Ascending aorta (tissue), 2 donors: ENCODE measurements at regions of chr1 and their contacts with region 1.

Region 1: DNA sequence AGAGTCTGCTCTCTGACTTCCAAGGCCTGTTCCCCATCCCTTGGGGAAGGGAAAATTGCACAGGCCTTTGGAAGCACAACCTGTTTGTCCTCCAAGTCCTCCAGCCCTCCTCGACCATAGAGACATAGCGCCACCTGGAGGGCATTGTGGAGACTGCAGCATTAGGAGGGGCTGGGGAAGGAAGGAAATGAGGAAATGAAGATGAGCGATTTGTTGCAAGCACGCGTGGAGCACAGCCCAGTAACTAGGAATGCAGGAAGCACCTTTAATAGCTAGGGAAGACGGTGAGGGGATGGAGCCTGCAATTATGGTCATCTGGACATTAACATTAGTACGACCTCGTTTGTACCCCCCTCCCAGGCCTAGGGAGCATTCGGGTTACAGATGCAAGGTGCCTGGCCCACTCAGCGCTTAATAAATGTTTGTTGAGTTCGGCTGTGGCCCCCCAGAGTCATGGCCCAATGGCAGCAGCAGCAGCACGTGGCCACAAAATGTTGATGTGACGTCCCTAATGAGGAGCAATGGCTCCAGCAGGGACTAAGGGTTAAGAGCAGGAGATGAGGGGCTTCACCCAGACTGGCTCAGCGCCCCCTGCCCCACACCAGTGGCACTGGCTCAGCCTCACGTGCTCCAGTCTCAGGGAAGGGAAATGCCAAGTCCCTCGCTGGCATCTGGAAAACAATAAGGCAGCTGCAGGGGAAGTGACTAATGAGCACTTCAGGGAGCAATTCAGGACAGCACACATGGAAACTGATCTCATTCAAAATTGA is 8.0 kb upstream of the CAMK2N1 start:
- DNase-seq: peak; percentile 35 to 91
- H3K4me3 ChIP-seq: no peak overlapping the region
- H3K27ac ChIP-seq: no peak overlapping the region
- H3K4me1 ChIP-seq: peaks cover 0 to 3% of the 10 kb centered on the region in 2 donors
- H3K27me3 ChIP-seq: no peaks in the 10 kb centered on the region
- CTCF ChIP-seq: peak; percentile 92 to 98 (median 94)

Region 2: DNA sequence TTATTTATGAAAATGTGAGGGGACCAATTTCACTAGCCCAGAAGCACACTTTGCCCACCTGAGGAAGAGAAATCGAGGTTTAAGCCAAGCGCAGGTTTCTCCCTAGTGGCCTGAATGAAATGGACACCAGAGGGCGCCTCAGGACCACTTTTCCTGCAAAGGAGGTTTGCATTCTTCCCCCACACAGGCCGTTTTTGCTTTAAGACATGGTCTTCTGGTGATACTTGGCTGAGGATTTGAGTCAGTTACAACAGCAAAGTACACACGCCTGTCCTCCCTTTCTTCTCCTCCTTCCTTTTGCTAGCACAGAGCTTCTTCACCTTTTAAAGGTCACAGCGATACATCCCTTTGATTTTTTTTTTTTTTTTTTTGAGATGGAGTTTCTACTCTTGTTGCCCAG is 576.0 kb before region 1 on chr1:
- intact Hi-C with region 1: loop called (anchors 1 kb)
- DNase-seq: peak in 1 of 2 donors; percentile 84
- H3K4me3 ChIP-seq: no peak overlapping the region
- H3K27ac ChIP-seq: no peak overlapping the region
- H3K4me1 ChIP-seq: no peaks in the 10 kb centered on the region
- H3K27me3 ChIP-seq: no peaks in the 10 kb centered on the region
- CTCF ChIP-seq: peak; percentile 67 to 91 (median 77)

Region 3: DNA sequence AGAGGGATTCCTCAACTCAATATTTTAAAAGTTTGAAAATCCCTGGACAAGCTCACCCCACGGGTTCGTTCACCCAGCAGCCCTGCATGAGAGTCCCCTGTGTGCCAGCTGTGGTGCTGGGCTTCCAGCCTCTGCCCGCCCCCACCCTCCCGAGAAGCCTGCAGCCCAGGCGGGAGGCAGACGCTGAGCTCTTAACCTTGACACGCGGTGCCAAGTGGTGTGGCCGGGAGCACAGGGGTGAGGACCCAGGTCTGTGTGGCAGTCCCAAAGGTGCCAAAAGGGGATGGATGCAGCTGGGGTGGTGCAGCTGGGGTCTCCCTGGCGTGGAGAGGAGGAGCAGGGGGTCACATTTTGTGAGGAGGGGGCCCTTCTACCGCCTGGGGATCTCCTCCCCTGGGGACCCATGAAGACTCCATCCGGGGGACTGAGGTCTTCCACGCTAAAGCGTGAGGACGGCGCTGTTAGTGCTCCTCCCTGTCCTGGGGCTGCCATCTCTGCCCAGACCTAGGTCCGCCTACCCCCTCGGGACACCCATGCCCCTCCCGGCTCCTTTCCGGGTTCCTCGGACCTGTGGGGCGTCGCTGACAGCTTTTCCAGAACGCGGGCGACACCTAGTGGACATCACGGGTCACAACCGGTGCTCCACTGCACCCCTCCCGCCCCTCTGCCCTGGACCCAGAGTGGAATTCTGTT is 342.0 kb before region 1 on chr1:
- intact Hi-C with region 1: loop called (anchors 5 kb)
- DNase-seq: peak in 1 of 2 donors; percentile 87
- H3K4me3 ChIP-seq: peak overlapping the region; percentile 44 to 49
- H3K27ac ChIP-seq: no peak overlapping the region
- H3K4me1 ChIP-seq: peaks cover 0 to 4% of the 10 kb centered on the region in 2 donors
- H3K27me3 ChIP-seq: no peaks in the 10 kb centered on the region
- CTCF ChIP-seq: peak; percentile 88 to 96 (median 93)

Region 4: GRCh38 chr1:20212685-20213331 is 281.2 kb before region 1 on chr1:
- intact Hi-C with region 1: loop called (anchors 2 kb)
- DNase-seq: peak in 1 of 2 donors; percentile 66
- H3K4me3 ChIP-seq: peak overlapping the region in 1 of 2 donors; percentile 16
- H3K27ac ChIP-seq: no peak overlapping the region
- H3K4me1 ChIP-seq: peaks cover 0 to 3% of the 10 kb centered on the region in 2 donors
- H3K27me3 ChIP-seq: no peaks in the 10 kb centered on the region
- CTCF ChIP-seq: peak; percentile 20 to 76 (median 62)

Region 5: GRCh38 chr1:20361806-20362640 is 132.0 kb before region 1 on chr1:
- intact Hi-C with region 1: loop called (anchors 5 kb)
- DNase-seq: no peak
- H3K4me3 ChIP-seq: no peak overlapping the region
- H3K27ac ChIP-seq: no peak overlapping the region
- H3K4me1 ChIP-seq: no peaks in the 10 kb centered on the region
- H3K27me3 ChIP-seq: no peaks in the 10 kb centered on the region
- CTCF ChIP-seq: peak; percentile 38 to 54 (median 42)

Region 6: GRCh38 chr1:20376880-20377494 is 117.0 kb before region 1 on chr1:
- intact Hi-C with region 1: loop called (anchors 1 kb)
- DNase-seq: no peak
- H3K4me3 ChIP-seq: no peak overlapping the region
- H3K27ac ChIP-seq: no peak overlapping the region
- H3K4me1 ChIP-seq: no peaks in the 10 kb centered on the region
- H3K27me3 ChIP-seq: no peaks in the 10 kb centered on the region
- CTCF ChIP-seq: peak; percentile 33 to 66 (median 49)

Region 7: GRCh38 chr1:20430355-20431175 is 63.5 kb before region 1 on chr1:
- intact Hi-C with region 1: no loop called
- DNase-seq: no peak
- H3K4me3 ChIP-seq: no peak overlapping the region
- H3K27ac ChIP-seq: no peak overlapping the region
- H3K4me1 ChIP-seq: no peaks in the 10 kb centered on the region
- H3K27me3 ChIP-seq: no peaks in the 10 kb centered on the region
- CTCF ChIP-seq: peak in 1 of 3 experiments; percentile 33